Left colon (tissue), 2 donors: ENCODE measurements at regions of chr19 and their contacts with region 1.

Region 1: DNA sequence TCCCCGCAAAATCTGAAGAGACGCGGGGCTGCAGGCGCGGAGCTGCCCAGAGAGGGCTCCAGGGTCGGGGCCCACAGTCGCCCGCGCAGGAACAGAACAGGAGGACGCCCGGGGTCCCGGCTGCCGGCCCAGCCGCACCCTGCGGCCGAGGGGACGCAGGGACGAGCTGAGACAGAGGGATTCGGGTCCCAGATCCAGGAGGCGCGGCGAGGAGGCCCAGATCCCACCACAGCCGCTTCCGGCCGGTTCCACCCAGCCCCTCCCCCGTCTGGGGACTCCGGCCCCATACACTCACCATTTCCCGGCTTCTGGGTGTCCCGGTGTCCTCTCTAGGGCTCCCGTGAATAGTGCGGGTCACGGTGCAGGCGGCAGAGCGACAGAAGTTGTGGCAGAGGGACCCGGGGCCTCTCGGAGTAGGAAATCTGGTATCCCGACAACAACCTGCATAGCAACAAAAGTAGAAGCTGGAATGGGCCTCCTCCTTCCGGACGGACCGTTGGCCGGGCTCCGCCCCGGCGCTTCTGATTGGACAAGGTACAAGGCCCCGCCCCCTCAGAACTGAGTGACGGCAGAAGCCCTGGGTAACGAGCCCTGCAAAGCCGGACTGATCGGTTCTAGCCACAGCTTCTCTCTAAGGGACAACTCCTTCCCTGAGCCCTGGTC is at the start of gene ZNF20:
- DNase-seq: peak; percentile 97 to 99
- ATAC-seq: peak; percentile 97
- total RNA-seq, gene ZNF20: 3.8 to 6.2 TPM

Region 2: GRCh38 chr19:11881151-11881800 is 258.7 kb before region 1 on chr19:
- intact Hi-C with region 1: loop called in 1 of 2 experiments (anchors 5 kb)
- DNase-seq: peak; percentile 37 to 69
- ATAC-seq: peak; percentile 89

Region 3: DNA sequence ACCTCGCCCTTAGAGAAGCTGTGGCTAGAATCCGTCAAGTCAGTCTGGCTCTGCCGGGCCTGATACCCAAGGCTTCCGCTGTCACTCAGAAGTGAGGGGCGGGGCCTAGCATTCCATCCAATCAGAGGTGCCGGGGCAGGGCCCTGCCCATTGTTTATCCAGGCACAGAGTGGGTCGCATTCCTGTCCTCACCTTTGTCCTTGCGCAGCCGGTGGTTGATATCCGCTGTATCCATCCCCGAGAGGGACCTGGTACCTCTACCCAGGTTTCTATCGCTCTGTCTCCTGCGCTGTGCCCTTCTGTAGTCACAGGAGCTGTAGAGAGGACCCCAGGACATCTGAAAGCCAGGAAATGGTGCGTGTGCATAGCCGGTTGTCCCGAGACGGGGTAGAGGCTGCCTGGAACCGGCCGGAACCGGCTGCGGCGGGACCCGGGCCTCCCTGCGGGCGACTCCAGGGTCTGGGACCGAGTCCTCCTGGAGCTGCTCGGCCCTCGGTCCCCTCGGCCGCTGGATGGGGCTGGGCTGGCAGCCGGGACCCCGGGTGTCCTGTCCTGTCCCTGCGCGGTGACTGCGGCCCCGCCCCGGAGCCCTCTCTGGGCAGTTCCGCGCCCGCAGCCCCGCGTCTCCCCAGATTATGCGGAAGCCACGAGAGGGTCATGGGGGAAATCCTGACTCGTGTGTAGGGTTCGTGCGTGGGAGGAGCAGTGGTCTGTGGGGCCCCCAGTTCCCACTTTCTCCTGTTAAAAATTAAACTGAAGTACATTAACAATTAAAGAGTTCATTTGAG is 175.0 kb before region 1 on chr19 and contains the start of gene ZNF763:
- intact Hi-C with region 1: no loop called
- DNase-seq: peak; percentile 97 to 98
- ATAC-seq: peak; percentile 98
- total RNA-seq, gene ZNF763: 6.0 to 7.8 TPM

Region 4: DNA sequence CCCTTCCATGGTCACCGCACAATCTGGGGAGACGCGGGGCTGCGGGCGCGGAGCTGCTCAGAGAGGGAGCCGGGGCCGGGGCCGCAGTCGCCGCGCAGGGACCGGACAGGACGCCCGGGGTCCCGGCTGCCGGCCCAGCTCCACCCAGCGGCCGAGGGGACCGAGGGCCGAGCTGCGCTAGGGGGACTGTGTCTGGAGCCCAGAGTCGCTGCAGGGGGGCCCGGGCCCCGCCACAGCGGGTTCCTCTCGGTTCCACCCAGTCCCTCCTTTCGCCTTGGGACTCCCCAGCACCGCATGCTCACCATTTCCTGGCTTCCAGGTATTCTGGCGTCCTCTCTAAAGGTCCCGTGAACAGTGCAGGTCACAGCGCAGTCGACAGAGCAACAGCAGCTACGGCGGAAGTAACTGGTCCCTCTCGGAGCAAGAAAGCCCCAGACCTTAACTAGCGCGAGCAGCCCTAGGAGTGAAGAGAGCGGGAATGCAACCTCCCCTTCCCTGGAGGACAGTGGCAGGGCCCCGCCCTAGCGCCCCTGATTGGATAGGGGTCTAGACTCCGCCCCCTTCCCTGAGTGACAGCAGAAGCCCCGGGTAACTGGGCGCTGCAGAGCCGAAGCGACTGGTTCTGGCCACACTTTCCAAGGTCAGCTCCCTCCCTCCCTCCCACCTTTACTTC is 87.4 kb before region 1 on chr19 and contains the start of gene ZNF878:
- intact Hi-C with region 1: loop called (anchors 5 to 10 kb)
- DNase-seq: peak; percentile 93 to 94
- ATAC-seq: peak; percentile 100
- total RNA-seq, gene ZNF878: 0.45 TPM in 1 of 2 donors, not detected in the other